Psoas muscle (tissue), 8 donors: ENCODE measurements at regions of chr9 and their contacts with region 1.

Region 1: DNA sequence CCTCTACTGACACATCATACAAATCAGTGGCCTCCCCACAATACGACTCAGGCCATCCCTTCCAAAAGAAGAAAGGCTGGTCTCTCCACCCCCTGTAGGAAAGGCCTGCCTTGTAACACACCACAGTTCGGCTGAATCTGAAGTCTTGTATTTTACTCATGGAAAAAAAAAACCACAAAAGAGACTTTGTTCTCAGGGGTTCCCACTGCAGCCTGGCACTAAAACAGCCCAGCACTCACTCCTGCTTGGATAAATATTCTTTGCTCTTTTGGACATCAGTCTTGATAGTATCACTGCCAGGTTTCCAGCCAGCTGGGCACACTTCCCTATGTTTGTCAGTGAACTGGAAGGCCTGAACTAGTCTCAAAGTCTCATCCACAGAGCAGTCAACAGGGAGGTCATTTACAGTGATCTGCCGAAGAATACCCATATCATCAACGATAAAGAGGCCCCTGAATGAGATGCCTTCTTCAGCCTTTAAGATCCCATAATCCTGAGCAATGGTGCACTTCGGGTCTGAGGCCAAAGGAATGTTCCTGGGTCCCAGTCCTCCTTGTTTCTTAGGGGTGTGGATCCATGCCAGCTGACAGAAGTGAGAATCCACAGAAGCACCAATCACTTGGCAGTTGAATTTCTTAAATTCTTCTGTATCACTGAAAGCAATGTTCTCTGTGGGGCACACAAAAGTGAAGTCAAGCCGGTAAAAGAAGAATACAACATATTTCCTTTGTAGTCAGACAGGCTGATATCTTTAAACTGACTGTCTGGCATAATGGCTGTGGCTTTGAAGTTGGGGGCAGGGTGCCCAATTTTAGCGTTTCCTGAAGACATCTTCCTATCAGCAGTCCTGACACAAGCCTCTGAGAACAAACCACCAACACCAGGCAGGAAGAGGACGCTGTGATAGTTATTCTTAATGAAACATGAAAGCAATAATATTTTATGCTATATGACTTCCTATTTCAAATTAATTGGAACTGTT is 198.1 kb downstream of the LURAP1L start:
- DNase-seq: no peak
- ATAC-seq: no peak
- H3K4me3 ChIP-seq: no peak overlapping the region
- H3K27ac ChIP-seq: no peak overlapping the region
- H3K4me1 ChIP-seq: no peaks in the 10 kb centered on the region
- H3K27me3 ChIP-seq: no peaks in the 10 kb centered on the region
- CTCF ChIP-seq: no peak

Region 2: DNA sequence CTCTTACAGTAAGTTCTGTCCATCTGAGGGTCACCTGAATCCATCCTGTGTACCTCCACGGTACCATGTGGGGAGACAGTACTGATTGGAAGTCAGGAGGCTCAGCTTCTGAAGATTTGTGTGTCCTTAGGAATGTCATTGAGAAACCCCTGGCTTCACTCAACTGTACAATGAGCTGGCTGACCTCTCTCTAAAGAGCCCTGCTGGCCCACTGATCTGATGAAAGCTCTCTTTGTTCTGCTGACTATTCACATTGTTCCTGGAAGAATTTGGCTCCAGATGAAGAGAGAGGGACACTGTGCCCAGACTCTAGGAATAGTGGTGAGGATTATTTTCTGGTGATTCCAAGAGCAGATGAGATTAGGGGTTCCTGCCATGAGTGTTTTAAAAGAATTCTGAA is 56.9 kb before region 1 on chr9:
- intact Hi-C with region 1: loop called in 1 of 2 experiments (anchors 10 kb)
- DNase-seq: no peak
- ATAC-seq: no peak
- H3K4me3 ChIP-seq: no peak overlapping the region
- H3K27ac ChIP-seq: no peak overlapping the region
- H3K4me1 ChIP-seq: no peaks in the 10 kb centered on the region
- H3K27me3 ChIP-seq: no peaks in the 10 kb centered on the region
- CTCF ChIP-seq: no peak